ENCODE measurements at regions of chr15 and their contacts with region 1.

Region 1: GRCh38 chr15:63504247-63504978 is at the start of gene USP3:
- DNase-seq: peak; percentile 98
- total RNA-seq, gene USP3: 16.2 TPM

Region 2: DNA sequence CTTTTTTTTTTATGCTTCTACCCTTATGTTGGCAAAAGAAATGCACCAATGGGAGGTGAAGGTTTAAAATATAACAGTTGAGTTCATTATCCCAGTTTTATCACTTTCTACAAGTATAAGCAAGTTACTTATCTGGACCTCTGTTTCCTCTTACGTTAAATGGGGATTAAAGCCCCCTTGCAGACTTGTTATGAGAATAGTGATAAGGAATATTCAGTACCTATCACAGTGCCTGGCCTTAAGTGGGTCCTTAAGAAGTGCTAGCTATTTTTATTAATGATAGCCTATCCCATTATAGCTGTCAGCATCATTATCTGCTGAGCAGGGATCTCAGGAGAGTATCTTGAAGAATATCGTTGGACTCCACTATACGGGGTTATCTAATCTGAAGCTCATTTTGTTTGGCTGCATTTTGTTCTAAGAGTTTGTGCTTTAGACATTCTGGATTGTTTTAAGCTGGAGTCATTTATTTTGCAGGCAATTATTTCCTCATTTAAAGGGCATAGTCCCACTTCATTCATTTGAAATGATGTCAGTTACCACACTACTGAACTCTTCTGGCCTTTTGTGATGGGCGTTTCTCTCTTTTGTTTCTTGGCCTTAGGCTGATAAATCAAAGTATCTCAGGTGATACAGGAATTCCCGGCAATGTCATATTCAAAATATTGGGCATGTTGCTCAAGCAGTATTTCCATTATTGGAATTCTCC is 286.2 kb before region 1 on chr15:
- intact Hi-C with region 1: no loop called
- DNase-seq: no peak

Region 3: DNA sequence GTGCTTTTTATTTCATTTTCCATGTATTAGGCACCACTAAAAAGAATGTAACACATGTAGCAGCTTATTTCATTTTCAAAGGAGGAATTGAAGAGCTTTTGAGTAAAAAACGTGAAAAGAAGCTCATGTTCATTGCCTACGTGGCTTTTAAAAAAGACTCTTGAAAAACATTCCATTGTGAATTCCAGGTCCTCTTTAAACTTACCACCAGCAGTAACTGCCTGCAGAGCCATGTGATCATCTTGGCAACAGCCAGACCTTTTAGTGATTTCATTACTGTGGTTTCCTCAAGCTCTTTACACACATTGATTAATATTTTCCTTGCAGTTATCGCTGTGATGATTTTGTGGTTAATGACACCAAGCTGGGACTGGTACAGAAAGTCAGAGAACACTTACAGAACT is 49.0 kb after region 1 on chr15:
- intact Hi-C with region 1: loop called (anchors 5 kb)
- DNase-seq: no peak

Region 4: DNA sequence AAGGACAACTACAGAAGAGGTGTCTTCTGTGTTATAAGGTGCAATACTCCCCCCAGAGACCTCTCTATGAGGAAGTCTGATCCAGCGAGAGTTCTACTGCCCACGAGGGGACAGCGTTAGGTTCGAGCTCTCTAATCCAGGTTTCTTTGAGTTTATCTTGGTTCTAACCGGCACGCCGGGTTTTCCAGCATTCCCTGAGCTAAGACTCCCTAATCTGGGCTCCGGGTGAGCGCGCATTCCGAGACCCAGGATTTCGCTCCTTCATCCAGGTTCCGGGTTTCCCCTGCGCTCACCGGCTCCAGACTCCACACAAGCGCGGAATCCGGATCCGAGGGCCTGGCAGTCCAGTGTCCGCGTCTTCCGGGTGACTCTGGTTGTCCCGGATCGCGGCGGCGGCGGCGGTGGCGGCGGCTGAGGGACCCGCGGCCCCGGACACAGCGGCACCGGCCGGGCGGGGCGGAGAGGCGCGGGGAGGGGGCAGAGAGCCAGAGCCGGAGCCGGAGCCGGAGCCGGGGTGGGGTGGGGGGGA is 955.9 kb after region 1 on chr15 and contains the start of gene ZNF609:
- intact Hi-C with region 1: loop called (anchors 10 kb)
- DNase-seq: peak; percentile 96
- total RNA-seq, gene ZNF609: 15.3 TPM